K562 (cell line): ENCODE measurements at regions of chr12 and their contacts with region 1.

Region 1: GRCh38 chr12:92408072-92408900 is 262.6 kb upstream of the BTG1 start:
- DNase-seq: peak; percentile 23 to 70 (median 41)
- ATAC-seq: peak; percentile 63
- H3K4me3 ChIP-seq: no peak overlapping the region
- H3K27ac ChIP-seq: no peak overlapping the region
- H3K4me1 ChIP-seq: peaks cover 7 to 20% of the 10 kb centered on the region in 2 experiments; a peak in 3 of 5 replicates
- H3K27me3 ChIP-seq: no peaks in the 10 kb centered on the region
- CTCF ChIP-seq: peak; percentile 56 to 68 (median 59)
- EP300 ChIP-seq: no peak; the same call in 1 of the 2 replicates
- POLR2A ChIP-seq: no peak
- RAD21 ChIP-seq: peak; percentile 45 to 79

Region 2: DNA sequence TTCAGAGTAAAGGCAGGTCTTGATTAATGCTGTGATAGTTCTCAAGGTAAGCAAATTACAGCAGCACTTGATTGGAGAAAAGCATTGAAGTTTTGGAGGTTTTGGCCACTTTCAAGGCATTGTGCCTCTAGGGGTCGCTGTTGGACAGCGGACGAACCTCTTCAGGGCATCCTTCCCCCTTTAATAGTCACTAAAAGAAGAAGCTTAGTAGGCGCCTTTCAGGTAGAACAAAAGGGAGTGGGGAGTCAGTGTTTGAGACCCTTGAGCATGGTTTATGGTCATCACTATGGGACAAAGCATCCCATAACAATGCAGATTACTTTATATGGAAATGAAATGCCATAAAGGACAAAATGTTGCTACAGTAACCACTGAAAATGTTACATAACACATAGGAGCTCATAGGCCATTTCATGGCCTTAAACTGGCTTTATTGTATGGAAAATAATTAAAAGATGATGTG is 1026.2 kb before region 1 on chr12:
- CTCF ChIA-PET with region 1: no interaction called
- POLR2A ChIA-PET with region 1: no interaction called
- in situ Hi-C with region 1: no loop called
- intact Hi-C with region 1: loop called (anchors 10 kb)
- DNase-seq: peak; percentile 42 to 85 (median 50)
- ATAC-seq: peak; percentile 84
- H3K4me3 ChIP-seq: no peak overlapping the region
- H3K27ac ChIP-seq: no peak overlapping the region
- H3K4me1 ChIP-seq: no peaks in the 10 kb centered on the region
- H3K27me3 ChIP-seq: no peaks in the 10 kb centered on the region
- CTCF ChIP-seq: peak; percentile 66 to 88 (median 82)
- EP300 ChIP-seq: no peak
- POLR2A ChIP-seq: no peak
- RAD21 ChIP-seq: peak; percentile 79 to 83

Region 3: DNA sequence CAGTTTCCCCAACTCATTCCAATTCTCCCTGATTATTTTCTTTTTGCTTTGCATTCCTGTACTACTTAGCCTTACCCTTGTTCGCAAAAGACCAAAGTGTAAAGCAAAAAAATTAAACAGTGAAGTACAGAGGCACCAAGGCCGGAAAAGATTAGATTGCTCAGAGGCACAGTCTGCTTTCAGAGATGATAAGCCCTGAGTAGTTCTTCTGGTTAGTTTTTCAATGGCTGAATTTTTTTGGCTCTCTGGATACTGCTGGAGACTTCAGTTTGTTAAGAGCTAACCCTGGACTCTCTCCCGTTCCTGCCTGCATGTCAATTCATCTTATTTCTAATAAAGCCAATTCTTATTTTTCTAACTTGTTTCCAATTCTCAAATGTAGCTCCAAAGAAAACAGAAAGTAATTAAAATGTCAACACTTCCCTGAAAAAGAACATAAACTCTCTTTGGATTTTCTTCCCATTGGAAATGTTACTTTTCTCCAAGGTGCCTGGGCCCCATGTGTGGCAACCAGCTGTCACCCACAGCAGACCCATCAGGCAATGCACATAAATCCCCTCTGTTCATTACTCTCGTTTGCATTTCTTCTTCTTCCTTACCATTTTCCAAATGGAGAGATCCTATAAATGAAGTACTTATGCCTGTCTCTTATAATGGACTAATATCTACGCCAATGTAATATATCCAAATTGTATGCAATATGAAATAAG is 405.5 kb before region 1 on chr12:
- CTCF ChIA-PET with region 1: no interaction called
- POLR2A ChIA-PET with region 1: no interaction called
- in situ Hi-C with region 1: no loop called
- intact Hi-C with region 1: loop called (anchors 10 kb)
- DNase-seq: peak; percentile 15 to 78 (median 43)
- ATAC-seq: peak; percentile 85
- H3K4me3 ChIP-seq: no peak overlapping the region
- H3K27ac ChIP-seq: peak overlapping the region; percentile 65
- H3K4me1 ChIP-seq: peaks cover 4 to 31% of the 10 kb centered on the region in 2 experiments; a peak in 4 of 5 replicates
- H3K27me3 ChIP-seq: no peaks in the 10 kb centered on the region
- CTCF ChIP-seq: no peak
- EP300 ChIP-seq: peak; percentile 86; the same call in 1 of the 2 replicates
- POLR2A ChIP-seq: no peak
- RAD21 ChIP-seq: 0 out of 4 replicates have a peak, but pooled peaks of 1 of the 2 experiments have one; percentile 13

Region 4: DNA sequence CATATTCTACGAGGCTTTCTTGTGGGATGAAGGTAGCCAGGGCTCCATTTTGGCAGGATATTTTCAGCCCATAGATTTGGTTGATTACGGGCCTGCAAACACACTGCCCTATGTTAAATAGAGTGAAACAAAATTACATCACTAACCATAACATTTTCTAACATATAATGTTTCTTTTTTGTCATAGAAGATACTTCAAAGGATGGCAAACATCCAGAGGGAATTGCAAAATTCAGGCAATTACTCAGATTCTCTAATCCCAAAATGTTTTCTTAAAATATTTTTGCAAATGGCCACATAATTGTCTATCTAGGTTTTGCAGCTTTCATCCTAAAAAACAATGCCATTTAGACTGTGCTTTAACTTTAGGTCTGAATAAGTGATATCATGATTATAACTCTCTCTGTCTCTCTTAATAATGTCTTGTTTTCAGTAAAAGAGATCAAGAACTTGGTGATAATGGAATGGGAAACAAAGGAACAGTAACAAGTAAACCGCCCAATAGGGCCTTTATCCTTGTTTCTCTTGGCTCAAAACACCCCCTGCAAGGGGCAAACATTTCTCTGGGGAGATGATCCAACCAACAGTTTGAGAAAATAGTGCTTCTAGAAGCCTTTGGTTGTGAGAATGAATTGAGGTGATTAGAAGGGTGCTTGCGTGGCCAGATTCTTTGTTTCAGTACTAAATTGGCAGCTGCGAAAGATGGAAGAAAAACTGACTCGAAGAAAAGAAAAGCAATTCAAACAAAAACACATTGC is 208.3 kb before region 1 on chr12:
- CTCF ChIA-PET with region 1: no interaction called
- POLR2A ChIA-PET with region 1: no interaction called
- in situ Hi-C with region 1: no loop called
- intact Hi-C with region 1: no loop called
- DNase-seq: no peak
- ATAC-seq: no peak
- H3K4me3 ChIP-seq: no peak overlapping the region
- H3K27ac ChIP-seq: no peak overlapping the region
- H3K4me1 ChIP-seq: no peaks in the 10 kb centered on the region
- H3K27me3 ChIP-seq: no peaks in the 10 kb centered on the region
- CTCF ChIP-seq: no peak
- EP300 ChIP-seq: no peak
- POLR2A ChIP-seq: no peak
- RAD21 ChIP-seq: no peak

Region 5: GRCh38 chr12:92234533-92234932 is 173.8 kb before region 1 on chr12:
- CTCF ChIA-PET with region 1: no interaction called
- POLR2A ChIA-PET with region 1: no interaction called
- in situ Hi-C with region 1: no loop called
- intact Hi-C with region 1: loop called (anchors 10 kb)
- DNase-seq: no peak
- ATAC-seq: peak; percentile 61
- H3K4me3 ChIP-seq: no peak overlapping the region
- H3K27ac ChIP-seq: no peak overlapping the region
- H3K4me1 ChIP-seq: peaks cover 0 to 12% of the 10 kb centered on the region in 2 experiments; a peak in 4 of 5 replicates
- H3K27me3 ChIP-seq: no peaks in the 10 kb centered on the region
- CTCF ChIP-seq: no peak
- EP300 ChIP-seq: no peak
- POLR2A ChIP-seq: no peak
- RAD21 ChIP-seq: no peak

Region 6: DNA sequence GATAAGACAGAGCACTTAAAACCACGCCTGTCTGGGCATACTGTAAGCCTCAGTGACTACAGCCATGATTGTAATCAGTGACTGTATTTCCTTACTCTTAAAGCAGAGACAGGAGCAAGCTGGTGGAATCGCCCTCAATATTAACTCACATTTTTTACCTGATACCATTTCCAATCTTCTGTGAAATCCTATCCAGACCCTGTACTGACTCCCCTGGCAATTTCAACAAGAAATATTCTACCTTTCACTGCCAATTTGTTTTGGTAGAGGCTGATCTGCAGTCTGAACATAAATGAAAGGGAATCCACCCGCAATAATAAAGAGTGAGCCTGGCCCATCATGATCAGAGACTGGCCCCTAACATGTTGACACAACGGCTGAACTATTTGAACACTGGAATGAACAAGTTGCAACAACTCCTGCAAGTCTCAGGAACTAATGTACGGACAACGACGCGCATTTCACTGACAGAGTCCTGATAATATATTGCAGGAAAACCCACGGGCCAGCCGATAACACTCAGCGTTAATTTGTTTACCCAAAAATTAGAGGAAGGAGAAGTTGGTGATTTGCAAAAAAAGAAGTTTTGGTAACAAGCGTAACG is 67.1 kb before region 1 on chr12:
- CTCF ChIA-PET with region 1: no interaction called
- POLR2A ChIA-PET with region 1: interaction called, 3 read pairs
- in situ Hi-C with region 1: no loop called
- intact Hi-C with region 1: loop called (anchors 5 kb)
- DNase-seq: peak in 2 of 4 experiments; percentile 31 to 69
- ATAC-seq: peak; percentile 86
- H3K4me3 ChIP-seq: peak overlapping the region; percentile 12; the same call in 1 of the 2 replicates
- H3K27ac ChIP-seq: peak overlapping the region; percentile 78
- H3K4me1 ChIP-seq: peaks cover 4 to 30% of the 10 kb centered on the region in 2 experiments; a peak in 4 of 5 replicates
- H3K27me3 ChIP-seq: no peaks in the 10 kb centered on the region
- CTCF ChIP-seq: no peak
- EP300 ChIP-seq: peak; percentile 74
- POLR2A ChIP-seq: no peak
- RAD21 ChIP-seq: peak in 1 of 2 experiments; percentile 19; a peak in 1 of 4 replicates

Region 7: DNA sequence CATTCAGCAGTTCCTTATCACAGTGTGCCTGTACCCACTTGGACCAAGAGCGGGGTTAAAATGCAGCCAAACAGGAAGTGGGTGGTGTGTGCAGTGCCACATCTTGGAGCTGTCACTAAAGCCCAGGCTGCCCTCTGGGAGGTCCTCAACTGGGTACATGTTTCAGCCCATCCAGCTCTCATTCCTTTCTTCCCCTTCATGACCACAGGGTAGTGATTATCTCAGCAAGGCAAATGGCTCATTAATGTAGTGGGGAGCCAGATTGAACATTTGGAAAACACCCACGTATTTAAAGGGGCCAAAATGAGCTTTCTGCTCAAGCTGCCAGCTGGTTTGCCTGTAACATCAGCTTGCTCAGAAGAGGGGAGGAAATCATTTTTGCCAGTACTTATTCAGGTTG is 51.9 kb before region 1 on chr12:
- CTCF ChIA-PET with region 1: no interaction called
- POLR2A ChIA-PET with region 1: no interaction called
- in situ Hi-C with region 1: no loop called
- intact Hi-C with region 1: loop called (anchors 1 kb)
- DNase-seq: no peak
- ATAC-seq: no peak
- H3K4me3 ChIP-seq: no peak overlapping the region
- H3K27ac ChIP-seq: no peak overlapping the region
- H3K4me1 ChIP-seq: peaks cover 23 to 27% of the 10 kb centered on the region in 2 experiments; a peak in 4 of 5 replicates
- H3K27me3 ChIP-seq: no peaks in the 10 kb centered on the region
- CTCF ChIP-seq: no peak
- EP300 ChIP-seq: no peak
- POLR2A ChIP-seq: no peak
- RAD21 ChIP-seq: no peak

Region 8: GRCh38 chr12:92466391-92467305 is 58.4 kb after region 1 on chr12:
- CTCF ChIA-PET with region 1: no interaction called
- POLR2A ChIA-PET with region 1: no interaction called
- in situ Hi-C with region 1: no loop called
- intact Hi-C with region 1: loop called (anchors 5 kb)
- DNase-seq: no peak
- ATAC-seq: no peak
- H3K4me3 ChIP-seq: no peak overlapping the region
- H3K27ac ChIP-seq: no peak overlapping the region
- H3K4me1 ChIP-seq: peaks cover 0 to 10% of the 10 kb centered on the region in 2 experiments; a peak in 3 of 5 replicates
- H3K27me3 ChIP-seq: no peaks in the 10 kb centered on the region
- CTCF ChIP-seq: no peak
- EP300 ChIP-seq: no peak
- POLR2A ChIP-seq: no peak
- RAD21 ChIP-seq: no peak